Prostate gland (tissue), 2 donors: ENCODE measurements at regions of chr7 and their contacts with region 1.

Region 1: DNA sequence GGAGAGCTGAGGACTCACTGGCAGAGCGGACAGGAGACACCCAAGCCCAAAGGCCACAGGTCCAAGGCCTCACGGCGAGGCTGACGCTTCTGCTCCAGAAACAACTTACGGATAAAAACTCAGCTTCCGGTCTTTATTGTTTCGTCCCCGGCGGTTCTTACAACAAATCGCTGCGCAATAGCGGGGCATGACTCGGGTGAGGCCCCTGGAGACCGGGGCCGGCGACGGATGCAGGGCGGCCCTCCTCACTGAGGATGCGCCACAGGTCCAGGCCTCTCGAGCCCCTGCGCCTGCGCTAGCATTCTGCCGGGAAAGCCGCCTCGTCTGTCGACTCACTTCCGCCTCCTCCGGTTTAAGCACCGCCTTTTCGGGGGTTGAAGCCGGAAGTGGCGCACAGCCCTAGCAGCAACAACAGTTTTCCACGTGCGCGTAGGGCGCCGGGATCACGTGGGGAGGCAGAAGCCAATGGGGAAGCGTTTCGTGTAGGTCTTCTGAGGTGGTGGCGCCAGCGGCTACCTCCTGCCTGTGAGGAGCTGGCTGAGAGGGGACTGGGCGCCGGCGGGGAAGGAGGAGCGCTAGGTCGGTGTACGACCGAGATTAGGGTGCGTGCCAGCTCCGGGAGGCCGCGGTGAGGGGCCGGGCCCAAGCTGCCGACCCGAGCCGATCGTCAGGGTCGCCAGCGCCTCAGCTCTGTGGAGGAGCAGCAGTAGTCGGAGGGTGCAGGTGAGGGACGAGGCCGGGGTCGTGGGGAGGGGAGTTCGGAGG is at the starts of genes DNAJB9 and THAP5:
- DNase-seq: peak; percentile 99
- H3K4me3 ChIP-seq: peak within 1 kb of the TSS; percentile 53 to 90
- H3K27ac ChIP-seq: peak within 1 kb of the TSS; percentile 89 to 97
- H3K4me1 ChIP-seq: no peaks in the 10 kb centered on the region
- H3K27me3 ChIP-seq: no peaks in the 10 kb centered on the region
- CTCF ChIP-seq: peak in 2 of 4 experiments; percentile 17 to 34
- POLR2A ChIP-seq: peak; percentile 98
- total RNA-seq, gene DNAJB9: 27.2 to 64.0 TPM
- total RNA-seq, gene THAP5: 21.3 to 23.4 TPM

Region 2: GRCh38 chr7:108236681-108237415 is 332.7 kb before region 1 on chr7:
- intact Hi-C with region 1: no loop called
- DNase-seq: no peak
- H3K4me3 ChIP-seq: no peak overlapping the region
- H3K27ac ChIP-seq: no peak overlapping the region
- H3K4me1 ChIP-seq: no peaks in the 10 kb centered on the region
- H3K27me3 ChIP-seq: no peaks in the 10 kb centered on the region
- CTCF ChIP-seq: no peak
- POLR2A ChIP-seq: no peak

Region 3: DNA sequence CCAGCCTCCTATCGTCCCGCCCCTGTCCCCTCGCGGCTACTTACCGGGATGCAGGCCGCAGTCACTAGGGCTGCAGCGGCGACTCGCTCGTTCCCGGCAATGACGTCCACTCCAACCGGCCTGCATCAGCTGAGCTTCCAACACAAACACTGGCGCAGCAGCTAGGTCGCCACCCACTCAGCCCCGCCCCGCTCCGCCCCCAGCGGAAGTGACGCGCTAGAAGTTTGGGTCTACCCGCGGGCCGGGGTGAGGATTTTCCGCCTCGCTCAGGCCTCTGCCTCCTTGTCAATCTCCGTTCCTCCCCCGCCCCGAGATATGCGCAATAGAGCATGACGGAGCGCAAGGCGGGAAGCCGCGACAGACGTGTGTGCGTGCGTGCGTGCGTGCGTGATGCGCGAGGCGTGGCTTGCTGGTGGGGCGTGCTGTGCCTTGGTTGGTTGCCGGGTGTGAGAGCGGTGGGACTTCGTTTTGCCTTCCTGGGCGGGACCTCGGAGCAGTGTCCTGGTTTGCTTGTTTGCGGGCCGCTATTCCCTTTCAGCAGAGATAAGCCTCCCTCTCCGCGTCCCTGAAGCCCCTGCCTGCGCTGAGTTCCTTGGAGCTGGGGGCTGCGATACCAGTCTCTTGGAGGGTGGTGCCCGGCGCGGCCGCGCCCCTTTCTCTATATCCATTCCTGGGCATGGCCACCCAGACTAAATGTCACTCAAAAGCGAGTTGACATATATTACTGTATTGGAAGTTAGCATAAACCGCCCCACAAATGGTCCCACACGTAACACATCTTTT is 43.4 kb before region 1 on chr7 and contains the start of gene PNPLA8:
- intact Hi-C with region 1: loop called (anchors 2 kb)
- DNase-seq: peak; percentile 100
- H3K4me3 ChIP-seq: peak within 1 kb of the TSS; percentile 51 to 74
- H3K27ac ChIP-seq: peak within 1 kb of the TSS; percentile 94 to 97
- H3K4me1 ChIP-seq: no peaks in the 10 kb centered on the region
- H3K27me3 ChIP-seq: no peaks in the 10 kb centered on the region
- CTCF ChIP-seq: peak in 1 of 4 experiments; percentile 42
- POLR2A ChIP-seq: peak; percentile 93
- total RNA-seq, gene PNPLA8: 25.8 to 27.3 TPM

Region 4: GRCh38 chr7:108716783-108717182 is 147.2 kb after region 1 on chr7:
- intact Hi-C with region 1: no loop called
- DNase-seq: no peak
- H3K4me3 ChIP-seq: no peak overlapping the region
- H3K27ac ChIP-seq: no peak overlapping the region
- H3K4me1 ChIP-seq: no peaks in the 10 kb centered on the region
- H3K27me3 ChIP-seq: no peaks in the 10 kb centered on the region
- CTCF ChIP-seq: no peak
- POLR2A ChIP-seq: no peak

Region 5: DNA sequence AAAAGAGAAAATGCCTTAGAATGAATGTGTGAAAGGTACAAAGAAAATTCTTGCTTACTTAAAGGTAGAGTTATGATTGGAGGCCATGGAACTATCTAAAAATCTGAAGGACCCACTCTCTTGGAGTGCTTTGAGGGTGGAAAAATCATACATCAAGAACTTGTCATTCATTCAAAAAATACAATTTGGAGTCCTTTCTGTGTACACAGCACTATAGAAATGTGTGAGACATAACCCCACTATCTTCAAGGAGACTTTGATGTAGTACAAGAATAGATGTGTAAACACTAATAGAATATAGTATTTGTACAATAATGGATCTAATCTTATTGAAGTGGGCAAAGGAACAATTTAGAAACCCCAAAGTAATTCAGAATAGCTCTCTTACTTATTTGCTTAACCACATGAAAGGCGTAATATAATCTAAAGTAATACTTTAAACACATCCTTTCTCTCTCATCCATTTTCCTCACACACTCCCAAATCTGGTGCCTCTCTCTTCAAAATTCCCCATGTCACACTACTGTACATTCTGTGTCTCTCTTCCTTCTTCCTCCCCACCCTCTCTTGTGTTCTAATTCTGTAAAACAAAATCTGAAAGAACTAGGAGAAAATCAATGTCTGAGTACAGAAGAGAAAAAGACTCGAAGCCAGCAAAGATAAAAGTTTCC is 166.8 kb after region 1 on chr7:
- intact Hi-C with region 1: no loop called
- DNase-seq: no peak
- H3K4me3 ChIP-seq: no peak overlapping the region
- H3K27ac ChIP-seq: no peak overlapping the region
- H3K4me1 ChIP-seq: no peaks in the 10 kb centered on the region
- H3K27me3 ChIP-seq: no peaks in the 10 kb centered on the region
- CTCF ChIP-seq: no peak
- POLR2A ChIP-seq: no peak

Region 6: DNA sequence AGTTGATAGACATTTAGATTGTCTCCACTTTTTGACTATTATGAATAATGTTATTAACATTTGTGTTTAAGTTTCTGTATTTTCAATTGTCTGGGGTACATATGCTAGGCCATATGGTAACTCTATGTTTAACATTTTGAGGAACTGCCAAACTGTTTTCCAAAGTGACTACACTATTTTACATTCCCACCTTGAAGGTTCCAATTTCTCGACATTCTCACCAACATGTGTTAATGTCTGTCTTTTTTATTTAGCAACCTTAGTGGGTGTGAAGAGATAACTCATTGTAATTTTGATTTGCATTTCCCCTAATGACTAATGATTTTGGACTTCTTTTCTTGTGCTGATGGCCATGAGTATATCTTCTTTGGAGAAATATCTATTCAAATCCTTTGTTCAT is 832.5 kb after region 1 on chr7:
- intact Hi-C with region 1: no loop called
- DNase-seq: no peak
- H3K4me3 ChIP-seq: no peak overlapping the region
- H3K27ac ChIP-seq: no peak overlapping the region
- H3K4me1 ChIP-seq: no peaks in the 10 kb centered on the region
- H3K27me3 ChIP-seq: no peaks in the 10 kb centered on the region
- CTCF ChIP-seq: no peak
- POLR2A ChIP-seq: no peak